ENCODE measurements at regions of chr11 and their contacts with region 1.

Region 1: GRCh38 chr11:65382033-65382807 is at the start of gene SLC25A45:
- DNase-seq: peak; percentile 97
- ATAC-seq: peak; percentile 84
- H3K4me3 Mint-ChIP-seq: peak within 1 kb of the TSS; percentile 78
- H3K27ac Mint-ChIP-seq: peak within 1 kb of the TSS; percentile 97
- H3K4me1 Mint-ChIP-seq: peaks cover 37% of the 10 kb centered on the region
- H3K27me3 Mint-ChIP-seq: no peaks in the 10 kb centered on the region
- total RNA-seq, gene SLC25A45: 13.2 to 14.3 TPM

Region 2: GRCh38 chr11:64409707-64410403 is 972.4 kb before region 1 on chr11:
- CTCF ChIA-PET with region 1: no interaction called
- POLR2A ChIA-PET with region 1: no interaction called
- intact Hi-C with region 1: no loop called
- DNase-seq: no peak
- ATAC-seq: no peak
- H3K4me3 Mint-ChIP-seq: no peak overlapping the region
- H3K27ac Mint-ChIP-seq: no peak overlapping the region
- H3K4me1 Mint-ChIP-seq: no peaks in the 10 kb centered on the region
- H3K27me3 Mint-ChIP-seq: no peaks in the 10 kb centered on the region

Region 3: GRCh38 chr11:65354265-65355012 is 27.8 kb before region 1 on chr11 and contains the start of gene TIGD3:
- CTCF ChIA-PET with region 1: no interaction called
- POLR2A ChIA-PET with region 1: interaction called, 3 read pairs
- intact Hi-C with region 1: loop called in 1 of 2 experiments (anchors 1 kb)
- DNase-seq: peak; percentile 98
- ATAC-seq: peak; percentile 99
- H3K4me3 Mint-ChIP-seq: peak within 1 kb of the TSS; percentile 73
- H3K27ac Mint-ChIP-seq: peak within 1 kb of the TSS; percentile 42
- H3K4me1 Mint-ChIP-seq: peaks cover 13% of the 10 kb centered on the region
- H3K27me3 Mint-ChIP-seq: no peaks in the 10 kb centered on the region
- total RNA-seq, gene TIGD3: 0.58 to 1.1 TPM

Region 4: DNA sequence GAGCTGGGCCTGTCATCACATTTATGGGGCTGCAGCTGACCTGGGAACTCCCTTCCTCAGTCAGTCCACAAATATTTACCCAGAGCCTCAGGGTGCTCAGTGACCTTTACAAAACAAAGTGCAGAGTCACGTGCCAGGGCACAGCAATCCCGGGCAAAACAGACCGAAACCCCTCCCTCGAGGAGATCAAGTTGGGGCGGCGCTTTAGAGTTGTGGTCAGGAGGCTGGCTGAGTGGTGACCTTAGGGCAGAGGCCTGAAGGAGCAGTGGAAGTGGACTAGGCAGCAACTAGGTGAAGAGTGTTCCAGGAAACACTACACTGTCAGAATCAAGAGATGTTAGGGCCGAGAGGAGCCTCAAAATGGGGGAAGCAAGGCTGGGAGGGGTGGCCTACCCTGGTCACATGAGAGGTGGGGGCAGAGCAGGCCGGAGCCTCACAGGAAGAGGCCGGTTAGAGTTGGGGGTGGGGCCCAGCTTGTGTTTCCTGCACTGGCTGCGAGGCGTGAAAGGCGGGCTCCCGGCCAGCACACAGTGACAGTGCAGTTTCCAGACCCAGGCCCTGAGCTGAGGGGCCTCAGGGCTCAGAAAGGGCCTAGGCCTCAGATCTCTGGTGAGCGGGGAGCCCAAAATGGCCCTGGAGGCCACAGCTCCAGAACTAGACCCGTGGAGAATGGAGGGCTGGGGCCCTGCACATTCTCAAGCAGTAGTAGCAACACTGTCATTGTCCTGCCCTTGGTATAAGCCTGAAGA is 36.7 kb after region 1 on chr11:
- CTCF ChIA-PET with region 1: interaction called, 27 read pairs
- POLR2A ChIA-PET with region 1: interaction called, 25 read pairs
- intact Hi-C with region 1: loop called (anchors 1 kb)
- DNase-seq: peak; percentile 97
- ATAC-seq: peak; percentile 48
- H3K4me3 Mint-ChIP-seq: peak overlapping the region; percentile 100
- H3K27ac Mint-ChIP-seq: peak overlapping the region; percentile 99
- H3K4me1 Mint-ChIP-seq: peaks cover 34% of the 10 kb centered on the region
- H3K27me3 Mint-ChIP-seq: peaks cover 6% of the 10 kb centered on the region

Region 5: GRCh38 chr11:65454696-65455456 is 72.7 kb after region 1 on chr11:
- CTCF ChIA-PET with region 1: no interaction called
- POLR2A ChIA-PET with region 1: no interaction called
- intact Hi-C with region 1: loop called in 1 of 2 experiments (anchors 1 kb)
- DNase-seq: peak; percentile 91
- ATAC-seq: peak; percentile 94
- H3K4me3 Mint-ChIP-seq: peak overlapping the region; percentile 92
- H3K27ac Mint-ChIP-seq: peak overlapping the region; percentile 85
- H3K4me1 Mint-ChIP-seq: peaks cover 40% of the 10 kb centered on the region
- H3K27me3 Mint-ChIP-seq: no peaks in the 10 kb centered on the region

Region 6: DNA sequence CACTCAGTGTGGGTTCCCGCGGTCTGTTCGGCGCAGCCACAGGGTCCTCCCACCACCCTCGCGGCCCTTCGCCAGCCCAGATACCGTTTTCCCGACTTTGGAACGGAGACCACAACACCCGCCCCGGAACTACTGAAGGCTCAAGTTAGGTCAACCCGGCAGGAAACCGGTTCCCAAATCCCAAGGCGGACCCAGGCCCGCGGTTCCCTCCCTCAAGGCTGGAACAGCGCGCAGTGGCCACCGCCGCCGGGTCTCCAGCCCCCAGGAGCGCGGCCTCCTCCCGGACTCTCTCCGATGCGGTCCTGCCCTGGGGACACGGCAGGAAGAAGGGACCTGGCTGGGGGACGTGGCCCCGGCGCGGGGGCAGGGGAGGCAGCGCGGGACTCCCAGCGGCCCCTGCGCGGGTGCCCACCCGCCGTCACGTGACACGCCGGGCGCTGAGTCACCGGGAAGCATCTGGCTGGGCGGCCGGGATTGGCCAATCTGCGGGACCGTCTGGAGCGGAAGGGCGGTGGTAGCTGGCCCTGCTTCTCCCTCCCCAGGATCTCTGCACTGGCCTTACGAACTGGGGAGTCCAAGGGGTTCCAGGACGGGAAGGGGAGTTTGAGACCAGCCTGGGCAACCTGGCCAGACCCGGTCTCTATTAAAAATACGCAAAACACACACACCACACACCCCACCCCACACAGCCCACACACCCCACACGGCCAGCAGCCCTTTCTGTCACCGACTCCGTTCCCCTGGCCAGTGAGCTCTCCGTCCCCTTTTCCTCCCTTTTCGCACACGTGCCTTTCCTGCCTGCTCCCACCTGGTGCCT is 95.1 kb after region 1 on chr11:
- CTCF ChIA-PET with region 1: interaction called, 5 read pairs
- POLR2A ChIA-PET with region 1: interaction called, 12 read pairs
- intact Hi-C with region 1: loop called (anchors 1 kb)
- DNase-seq: peak; percentile 96
- ATAC-seq: peak; percentile 88
- H3K4me3 Mint-ChIP-seq: peak overlapping the region; percentile 97
- H3K27ac Mint-ChIP-seq: peak overlapping the region; percentile 98
- H3K4me1 Mint-ChIP-seq: peaks cover 34% of the 10 kb centered on the region
- H3K27me3 Mint-ChIP-seq: no peaks in the 10 kb centered on the region

Region 7: DNA sequence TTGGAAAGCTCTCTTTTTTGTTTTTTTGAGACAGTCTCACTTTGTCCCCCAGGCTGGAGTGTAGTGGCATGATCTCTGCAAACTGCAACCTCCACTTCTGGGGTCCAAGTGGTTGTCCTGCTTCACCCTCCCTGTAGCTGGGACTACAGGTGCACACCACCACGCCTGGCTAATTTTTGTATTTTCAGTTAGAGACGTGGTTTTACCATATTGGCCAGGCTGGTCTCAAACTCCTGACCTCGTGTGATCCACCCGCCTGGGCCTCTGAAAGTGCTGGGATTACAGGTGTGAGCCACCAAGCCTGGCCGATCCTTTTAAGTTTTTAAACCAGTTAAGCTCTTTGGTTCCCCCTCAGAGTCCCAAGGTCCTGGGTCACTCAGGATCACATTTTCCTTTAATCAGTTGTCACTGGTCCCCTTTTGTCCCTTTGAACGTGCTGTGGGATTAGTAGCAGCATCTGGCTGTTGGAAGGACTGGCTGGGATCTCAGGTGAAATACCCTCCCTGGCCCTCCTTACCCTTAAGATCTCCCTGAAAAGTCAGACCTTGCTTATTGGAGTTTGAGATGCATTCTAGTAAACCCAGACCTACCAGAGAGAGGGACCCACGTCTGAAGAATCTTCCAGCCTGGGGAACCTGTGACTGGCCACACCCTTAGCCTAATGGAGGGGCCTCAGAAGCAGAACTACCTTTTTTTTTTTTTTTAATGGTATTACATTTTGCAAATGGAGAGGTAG is 124.7 kb after region 1 on chr11:
- CTCF ChIA-PET with region 1: interaction called, 16 read pairs
- POLR2A ChIA-PET with region 1: interaction called, 8 read pairs
- intact Hi-C with region 1: loop called (anchors 1 kb)
- DNase-seq: peak; percentile 75
- ATAC-seq: peak; percentile 51
- H3K4me3 Mint-ChIP-seq: no peak overlapping the region
- H3K27ac Mint-ChIP-seq: no peak overlapping the region
- H3K4me1 Mint-ChIP-seq: peaks cover 60% of the 10 kb centered on the region
- H3K27me3 Mint-ChIP-seq: no peaks in the 10 kb centered on the region

Region 8: GRCh38 chr11:66268283-66268951 is 886.2 kb after region 1 on chr11 and contains the start of gene RAB1B:
- CTCF ChIA-PET with region 1: no interaction called
- POLR2A ChIA-PET with region 1: no interaction called
- intact Hi-C with region 1: loop called in 1 of 2 experiments (anchors 5 kb)
- DNase-seq: peak; percentile 100
- ATAC-seq: peak; percentile 88
- H3K4me3 Mint-ChIP-seq: peak within 1 kb of the TSS; percentile 100
- H3K27ac Mint-ChIP-seq: peak within 1 kb of the TSS; percentile 97
- H3K4me1 Mint-ChIP-seq: peaks cover 28% of the 10 kb centered on the region
- H3K27me3 Mint-ChIP-seq: no peaks in the 10 kb centered on the region
- total RNA-seq, gene RAB1B: 114 to 147 TPM